Mammary epithelial cell (primary cell): ENCODE measurements at regions of chr12 and their contacts with region 1.

Region 1: DNA sequence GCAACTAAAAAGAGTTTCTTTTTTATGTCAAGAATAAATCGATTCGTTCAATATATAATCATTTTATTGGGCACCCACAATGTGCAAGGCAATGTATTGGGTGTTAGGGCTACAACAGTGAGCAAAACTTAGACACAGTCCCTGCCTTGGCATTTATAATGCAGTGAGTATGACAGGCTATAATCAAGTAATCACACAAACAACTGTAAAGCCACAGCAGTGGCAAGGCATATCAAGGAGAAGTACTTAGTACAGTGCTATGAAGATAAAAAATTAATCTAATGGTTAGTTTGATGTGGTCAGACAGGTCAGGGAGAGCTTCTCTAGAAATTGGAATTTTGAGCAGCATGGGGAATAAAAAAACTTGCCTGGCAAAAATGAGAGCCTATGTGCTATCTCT is 39.5 kb upstream of the OTOGL start:
- DNase-seq: no peak
- H3K4me3 ChIP-seq: no peak overlapping the region
- H3K27ac ChIP-seq: no peak overlapping the region
- H3K4me1 ChIP-seq: no peaks in the 10 kb centered on the region
- H3K27me3 ChIP-seq: no peaks in the 10 kb centered on the region
- CTCF ChIP-seq: no peak

Region 2: GRCh38 chr12:80101126-80101525 is 41.3 kb after region 1 on chr12:
- CTCF ChIA-PET with region 1: no interaction called
- dilution Hi-C with region 1: no loop called
- in situ Hi-C with region 1: no loop called
- intact Hi-C with region 1: loop called (anchors 2 kb)
- DNase-seq: peak; percentile 84
- H3K4me3 ChIP-seq: peak overlapping the region in 1 of 3 experiments; percentile 43
- H3K27ac ChIP-seq: no peak overlapping the region
- H3K4me1 ChIP-seq: peaks cover 16% of the 10 kb centered on the region
- H3K27me3 ChIP-seq: no peaks in the 10 kb centered on the region
- CTCF ChIP-seq: no peak

Region 3: DNA sequence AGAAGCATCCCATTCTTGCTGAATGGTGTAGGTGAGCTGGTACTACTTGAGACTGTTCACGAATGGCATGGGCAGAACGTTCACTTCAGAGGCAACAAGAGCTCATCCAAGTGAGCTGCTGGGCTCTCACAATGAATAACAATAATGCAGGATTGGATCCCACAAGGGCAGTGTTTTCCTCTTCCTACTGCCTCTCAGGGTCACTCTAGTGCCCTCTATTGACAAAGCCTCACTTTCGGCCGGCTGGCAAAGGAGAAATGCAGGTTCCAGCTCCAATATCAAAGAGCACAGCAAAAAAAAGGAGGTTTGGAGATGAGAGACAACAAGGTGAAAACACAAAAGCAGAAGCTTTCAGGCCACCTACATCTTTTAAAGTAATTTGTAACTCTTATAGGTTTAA is 573.0 kb after region 1 on chr12:
- CTCF ChIA-PET with region 1: no interaction called
- dilution Hi-C with region 1: no loop called
- in situ Hi-C with region 1: no loop called
- intact Hi-C with region 1: no loop called
- DNase-seq: peak; percentile 29
- H3K4me3 ChIP-seq: no peak overlapping the region
- H3K27ac ChIP-seq: no peak overlapping the region
- H3K4me1 ChIP-seq: no peaks in the 10 kb centered on the region
- H3K27me3 ChIP-seq: no peaks in the 10 kb centered on the region
- CTCF ChIP-seq: peak; percentile 35 to 48